AG04450 (cell line): ENCODE measurements at regions of chr10 and their contacts with region 1.

Region 1: DNA sequence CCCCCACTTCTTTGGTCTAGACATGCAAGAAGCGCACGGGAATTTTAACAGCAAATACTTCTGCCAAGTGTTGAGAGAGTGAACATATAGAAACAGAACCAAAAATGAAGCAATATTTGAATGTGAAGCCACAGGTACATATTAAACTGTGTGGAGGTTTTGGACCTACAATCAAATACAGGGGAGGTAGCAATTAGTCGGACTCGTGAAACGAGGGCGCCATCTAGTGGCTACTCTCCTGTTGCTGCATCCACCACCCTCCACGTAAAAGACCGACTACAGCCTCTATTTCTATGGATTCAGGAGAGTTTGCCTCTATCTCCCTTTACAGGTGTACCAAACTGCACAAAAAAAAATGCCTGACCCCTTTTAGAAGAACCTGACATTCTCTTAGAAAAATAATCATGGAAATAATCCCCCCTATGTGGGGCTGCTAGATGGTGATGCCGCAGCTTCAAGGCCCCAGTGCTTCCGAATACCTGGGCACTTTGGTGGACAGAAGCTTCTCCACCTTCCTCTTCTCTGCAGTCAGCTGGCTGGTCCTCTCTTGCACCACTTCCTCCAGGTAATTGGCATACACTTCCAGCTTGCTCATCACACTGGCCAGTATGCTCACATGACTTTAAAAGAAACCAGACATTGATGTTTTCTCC is 31.7 kb downstream of the TECTB start:
- DNase-seq: peak; percentile 55
- H3K4me3 ChIP-seq: no peak overlapping the region
- H3K27ac ChIP-seq: no peak overlapping the region
- H3K27me3 ChIP-seq: peaks cover 9% of the 10 kb centered on the region
- CTCF ChIP-seq: peak; percentile 93

Region 2: DNA sequence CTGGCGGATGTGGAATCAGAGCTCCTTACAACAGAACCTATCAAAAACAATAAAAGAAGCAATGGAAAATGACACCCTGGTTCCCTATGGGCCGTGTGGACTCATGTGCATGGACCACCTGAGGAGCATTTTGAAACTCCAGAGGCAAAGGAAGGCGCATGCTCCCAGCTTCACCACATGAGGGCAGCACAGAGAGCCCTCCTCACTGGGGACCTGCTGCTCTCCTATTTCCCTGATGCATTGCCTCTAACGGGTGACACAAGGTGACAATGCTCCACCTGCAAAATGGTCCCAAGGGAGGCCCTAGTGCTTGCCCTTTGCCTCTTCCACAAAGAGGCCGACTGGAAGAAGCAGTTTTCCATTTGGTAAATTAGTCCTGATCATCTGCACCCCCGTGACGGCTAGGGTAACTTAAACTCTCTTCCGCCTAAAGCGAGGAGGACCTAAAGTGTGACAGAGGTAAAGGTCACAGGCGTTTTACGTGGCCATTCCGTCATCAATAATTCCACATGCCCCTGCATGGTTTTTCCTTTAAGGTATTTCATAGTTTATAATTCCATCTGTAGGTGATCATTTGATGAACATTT is 199.1 kb before region 1 on chr10:
- CTCF ChIA-PET with region 1: interaction called, 29 read pairs
- POLR2A ChIA-PET with region 1: no interaction called
- DNase-seq: no peak
- H3K4me3 ChIP-seq: no peak overlapping the region
- H3K27ac ChIP-seq: no peak overlapping the region
- H3K27me3 ChIP-seq: peaks cover 4% of the 10 kb centered on the region
- CTCF ChIP-seq: peak; percentile 74

Region 3: DNA sequence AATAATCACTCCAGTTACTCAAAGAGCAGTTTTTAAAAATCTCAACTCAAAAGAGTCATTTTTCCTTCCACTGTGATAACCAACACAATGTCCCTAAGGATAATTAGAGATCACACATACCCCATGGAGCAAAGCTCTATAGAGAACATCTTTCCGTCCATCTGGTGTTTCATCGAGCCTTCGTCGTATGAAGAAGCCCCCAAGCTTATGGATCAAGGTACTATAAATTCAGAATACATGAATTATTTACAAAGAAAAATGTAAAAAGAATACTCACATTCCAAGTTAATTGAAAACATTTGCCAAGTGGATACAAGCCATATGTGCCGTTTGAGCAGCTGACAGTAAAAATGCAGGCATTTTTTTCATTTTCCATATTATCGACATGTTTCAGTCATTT is 146.2 kb before region 1 on chr10:
- CTCF ChIA-PET with region 1: interaction called, 11 read pairs
- POLR2A ChIA-PET with region 1: no interaction called
- DNase-seq: no peak
- H3K4me3 ChIP-seq: no peak overlapping the region
- H3K27ac ChIP-seq: no peak overlapping the region
- H3K27me3 ChIP-seq: no peaks in the 10 kb centered on the region
- CTCF ChIP-seq: no peak

Region 4: DNA sequence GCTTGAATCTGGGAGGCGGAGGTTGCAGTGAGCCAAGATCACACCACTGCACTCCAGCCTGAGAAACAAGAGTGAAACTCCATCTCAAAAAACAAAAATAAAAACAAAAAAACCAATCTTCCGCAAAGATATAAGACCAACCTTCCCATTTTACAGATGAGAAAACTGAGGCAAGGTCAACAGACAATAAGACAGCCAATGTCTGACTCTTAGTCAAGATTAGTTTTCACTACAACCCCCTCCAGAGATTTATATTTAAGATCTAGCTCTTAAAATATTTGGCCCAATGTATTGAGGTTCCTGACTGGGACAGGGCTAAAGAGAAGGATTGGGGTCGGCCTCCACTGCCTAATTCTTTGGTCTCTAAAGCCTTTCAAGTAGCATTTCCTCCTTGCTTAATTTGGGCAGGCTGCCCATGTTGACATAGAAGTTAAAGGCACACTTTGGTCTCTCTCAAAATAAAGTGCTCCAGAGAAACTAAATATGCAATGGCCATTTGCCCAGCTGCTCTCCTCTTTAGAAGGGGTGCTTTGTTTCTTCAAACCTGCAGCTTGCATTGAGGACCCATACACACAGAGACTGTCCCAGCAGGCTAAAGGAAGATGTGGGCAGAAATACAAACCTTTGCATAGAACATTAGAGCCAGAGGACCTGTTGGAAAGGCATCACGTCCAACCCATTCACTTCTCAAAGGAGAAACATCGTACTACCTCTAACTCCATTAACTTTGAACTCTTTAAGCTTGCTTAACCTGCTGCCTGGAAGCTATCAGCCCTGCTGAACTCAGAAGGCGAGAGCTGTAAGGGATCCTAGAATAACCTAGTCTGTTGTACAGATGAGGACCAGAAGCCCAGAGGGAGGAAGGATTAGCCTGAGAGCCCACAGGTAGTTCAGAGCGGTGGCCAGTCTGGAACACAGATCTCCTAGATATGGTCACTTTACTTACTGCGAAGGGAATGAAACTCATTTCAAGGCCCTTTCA is 27.8 kb before region 1 on chr10:
- CTCF ChIA-PET with region 1: no interaction called
- POLR2A ChIA-PET with region 1: no interaction called
- DNase-seq: no peak
- H3K4me3 ChIP-seq: no peak overlapping the region
- H3K27ac ChIP-seq: no peak overlapping the region
- H3K27me3 ChIP-seq: peaks cover 3% of the 10 kb centered on the region
- CTCF ChIP-seq: no peak

Region 5: GRCh38 chr10:112421479-112422130 is 106.7 kb after region 1 on chr10:
- CTCF ChIA-PET with region 1: no interaction called
- POLR2A ChIA-PET with region 1: no interaction called
- DNase-seq: no peak
- H3K4me3 ChIP-seq: no peak overlapping the region
- H3K27ac ChIP-seq: no peak overlapping the region
- H3K27me3 ChIP-seq: no peaks in the 10 kb centered on the region
- CTCF ChIP-seq: no peak